ENCODE measurements at regions of chr9 and their contacts with region 1.

Region 1: GRCh38 chr9:71285191-71285656 is 163.8 kb upstream of the TRPM3 start:
- DNase-seq: peak; percentile 41
- ATAC-seq: peak; percentile 80
- H3K4me3 Mint-ChIP-seq: no peak overlapping the region
- H3K27ac Mint-ChIP-seq: no peak overlapping the region
- H3K4me1 Mint-ChIP-seq: no peaks in the 10 kb centered on the region
- H3K27me3 Mint-ChIP-seq: peaks cover 8% of the 10 kb centered on the region
- CTCF ChIP-seq: peak; percentile 82

Region 2: DNA sequence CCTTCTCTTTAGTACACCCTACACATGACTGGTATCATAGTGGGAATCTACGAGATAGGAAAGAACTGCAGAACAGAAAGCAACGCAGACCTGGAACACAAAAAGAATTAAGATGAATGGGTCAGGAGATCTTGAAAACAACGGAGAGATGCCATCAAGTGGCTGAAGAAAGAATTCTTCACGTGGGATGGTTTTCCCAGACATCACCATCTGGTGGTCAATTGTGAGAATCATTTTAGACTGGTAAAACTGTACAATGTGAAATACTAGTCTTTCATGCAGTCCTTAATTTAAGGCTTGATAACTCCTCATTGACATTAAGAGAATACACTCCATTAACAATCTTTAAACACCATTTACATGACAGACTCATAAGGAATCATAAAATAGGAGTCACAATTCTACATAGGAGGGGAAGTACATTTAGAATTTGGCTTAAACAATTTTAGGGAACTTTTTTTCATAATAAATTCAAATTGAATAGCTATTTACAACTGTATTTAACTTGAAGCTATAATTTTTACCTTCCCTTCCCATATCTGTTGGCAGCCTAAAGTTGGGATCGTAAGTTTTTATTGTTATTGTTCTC is 35.4 kb before region 1 on chr9:
- CTCF ChIA-PET with region 1: interaction called, 13 read pairs
- POLR2A ChIA-PET with region 1: no interaction called
- intact Hi-C with region 1: no loop called
- DNase-seq: no peak
- ATAC-seq: no peak
- H3K4me3 Mint-ChIP-seq: no peak overlapping the region
- H3K27ac Mint-ChIP-seq: no peak overlapping the region
- H3K4me1 Mint-ChIP-seq: no peaks in the 10 kb centered on the region
- H3K27me3 Mint-ChIP-seq: peaks cover 6% of the 10 kb centered on the region
- CTCF ChIP-seq: peak; percentile 62

Region 3: GRCh38 chr9:71270554-71270953 is 14.7 kb before region 1 on chr9:
- CTCF ChIA-PET with region 1: interaction called, 14 read pairs
- POLR2A ChIA-PET with region 1: no interaction called
- intact Hi-C with region 1: no loop called
- DNase-seq: no peak
- ATAC-seq: no peak
- H3K4me3 Mint-ChIP-seq: no peak overlapping the region
- H3K27ac Mint-ChIP-seq: no peak overlapping the region
- H3K4me1 Mint-ChIP-seq: no peaks in the 10 kb centered on the region
- H3K27me3 Mint-ChIP-seq: peaks cover 1% of the 10 kb centered on the region
- CTCF ChIP-seq: no peak

Region 4: GRCh38 chr9:71295928-71296327 is 10.7 kb after region 1 on chr9:
- CTCF ChIA-PET with region 1: interaction called, 12 read pairs
- POLR2A ChIA-PET with region 1: no interaction called
- intact Hi-C with region 1: no loop called
- DNase-seq: no peak
- ATAC-seq: no peak
- H3K4me3 Mint-ChIP-seq: no peak overlapping the region
- H3K27ac Mint-ChIP-seq: no peak overlapping the region
- H3K4me1 Mint-ChIP-seq: no peaks in the 10 kb centered on the region
- H3K27me3 Mint-ChIP-seq: peaks cover 8% of the 10 kb centered on the region
- CTCF ChIP-seq: no peak

Region 5: DNA sequence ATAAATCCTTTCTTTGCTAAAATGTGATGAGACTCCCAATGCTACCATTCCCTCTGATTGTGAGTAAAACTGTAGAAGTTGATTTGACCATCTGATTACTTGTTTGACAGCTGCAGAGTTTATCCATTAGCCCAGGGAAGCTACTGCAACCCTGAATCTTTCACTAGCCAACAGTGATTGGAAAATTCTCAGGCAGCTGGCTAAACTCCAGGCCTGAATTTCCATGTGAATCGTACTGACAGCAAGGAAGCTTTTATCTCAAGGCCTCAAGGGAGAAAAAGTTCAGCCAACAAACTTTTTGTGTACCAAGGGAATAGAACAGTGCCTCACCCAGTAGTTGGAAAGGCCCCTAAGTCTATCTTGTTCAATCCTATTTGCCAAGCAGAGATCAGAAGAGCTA is 82.9 kb after region 1 on chr9:
- CTCF ChIA-PET with region 1: no interaction called
- POLR2A ChIA-PET with region 1: no interaction called
- intact Hi-C with region 1: no loop called
- DNase-seq: no peak
- ATAC-seq: no peak
- H3K4me3 Mint-ChIP-seq: no peak overlapping the region
- H3K27ac Mint-ChIP-seq: no peak overlapping the region
- H3K4me1 Mint-ChIP-seq: no peaks in the 10 kb centered on the region
- H3K27me3 Mint-ChIP-seq: peaks cover 7% of the 10 kb centered on the region
- CTCF ChIP-seq: no peak

Measured in activated CD8-positive, alpha-beta T cell treated with anti-CD3 and anti-CD28 coated beads for 36 hours (primary cell).